Mammary epithelial cell (primary cell): ENCODE measurements at regions of chr4 and their contacts with region 1.

Region 1: GRCh38 chr4:158253350-158253980 is 43.2 kb downstream of the TMEM144 start:
- DNase-seq: peak; percentile 43
- H3K4me3 ChIP-seq: no peak overlapping the region
- H3K27ac ChIP-seq: no peak overlapping the region
- H3K4me1 ChIP-seq: no peaks in the 10 kb centered on the region
- H3K27me3 ChIP-seq: no peaks in the 10 kb centered on the region
- CTCF ChIP-seq: peak; percentile 52 to 66

Region 2: DNA sequence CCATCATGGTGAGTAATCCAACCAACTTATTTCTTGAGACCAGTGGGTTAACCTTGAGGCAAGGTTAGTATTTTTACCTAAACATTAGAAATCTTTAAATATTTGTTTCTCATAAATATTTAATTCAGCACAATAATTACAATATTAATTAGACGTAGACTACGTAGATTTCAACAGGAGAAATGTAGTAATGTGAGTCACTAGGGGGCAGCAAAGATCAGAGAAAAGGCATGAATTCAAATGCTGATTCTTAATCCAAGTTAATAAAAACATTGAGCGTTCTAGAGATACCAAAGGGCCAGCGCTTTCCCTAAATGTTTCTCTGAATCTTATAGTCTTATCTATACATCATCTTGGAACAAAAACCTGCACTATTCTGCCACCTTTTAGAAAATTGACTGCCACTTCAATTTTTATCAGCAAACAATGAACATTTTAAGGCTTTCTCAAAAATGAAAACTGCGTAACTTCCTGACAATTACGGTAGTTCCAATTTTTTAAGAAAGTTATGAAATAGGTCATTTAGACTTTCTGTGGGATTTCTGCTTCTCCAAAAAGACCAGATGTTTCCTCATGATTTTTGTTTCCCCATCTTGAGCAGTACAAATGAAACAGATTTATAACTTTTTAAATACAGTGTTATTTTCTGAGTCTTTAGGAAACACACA is 261.3 kb before region 1 on chr4:
- CTCF ChIA-PET with region 1: no interaction called
- dilution Hi-C with region 1: no loop called
- in situ Hi-C with region 1: no loop called
- intact Hi-C with region 1: loop called (anchors 1 kb)
- DNase-seq: peak; percentile 58
- H3K4me3 ChIP-seq: peak overlapping the region in 2 of 3 experiments; percentile 21 to 24
- H3K27ac ChIP-seq: no peak overlapping the region
- H3K4me1 ChIP-seq: no peaks in the 10 kb centered on the region
- H3K27me3 ChIP-seq: no peaks in the 10 kb centered on the region
- CTCF ChIP-seq: peak; percentile 50 to 57

Region 3: GRCh38 chr4:158193171-158193749 is 60.2 kb before region 1 on chr4:
- CTCF ChIA-PET with region 1: no interaction called
- dilution Hi-C with region 1: no loop called
- in situ Hi-C with region 1: no loop called
- intact Hi-C with region 1: loop called (anchors 5 kb)
- DNase-seq: no peak
- H3K4me3 ChIP-seq: no peak overlapping the region
- H3K27ac ChIP-seq: no peak overlapping the region
- H3K4me1 ChIP-seq: no peaks in the 10 kb centered on the region
- H3K27me3 ChIP-seq: no peaks in the 10 kb centered on the region
- CTCF ChIP-seq: peak; percentile 57 to 69